ENCODE measurements at regions of chr20 and their contacts with region 1.

Region 1: DNA sequence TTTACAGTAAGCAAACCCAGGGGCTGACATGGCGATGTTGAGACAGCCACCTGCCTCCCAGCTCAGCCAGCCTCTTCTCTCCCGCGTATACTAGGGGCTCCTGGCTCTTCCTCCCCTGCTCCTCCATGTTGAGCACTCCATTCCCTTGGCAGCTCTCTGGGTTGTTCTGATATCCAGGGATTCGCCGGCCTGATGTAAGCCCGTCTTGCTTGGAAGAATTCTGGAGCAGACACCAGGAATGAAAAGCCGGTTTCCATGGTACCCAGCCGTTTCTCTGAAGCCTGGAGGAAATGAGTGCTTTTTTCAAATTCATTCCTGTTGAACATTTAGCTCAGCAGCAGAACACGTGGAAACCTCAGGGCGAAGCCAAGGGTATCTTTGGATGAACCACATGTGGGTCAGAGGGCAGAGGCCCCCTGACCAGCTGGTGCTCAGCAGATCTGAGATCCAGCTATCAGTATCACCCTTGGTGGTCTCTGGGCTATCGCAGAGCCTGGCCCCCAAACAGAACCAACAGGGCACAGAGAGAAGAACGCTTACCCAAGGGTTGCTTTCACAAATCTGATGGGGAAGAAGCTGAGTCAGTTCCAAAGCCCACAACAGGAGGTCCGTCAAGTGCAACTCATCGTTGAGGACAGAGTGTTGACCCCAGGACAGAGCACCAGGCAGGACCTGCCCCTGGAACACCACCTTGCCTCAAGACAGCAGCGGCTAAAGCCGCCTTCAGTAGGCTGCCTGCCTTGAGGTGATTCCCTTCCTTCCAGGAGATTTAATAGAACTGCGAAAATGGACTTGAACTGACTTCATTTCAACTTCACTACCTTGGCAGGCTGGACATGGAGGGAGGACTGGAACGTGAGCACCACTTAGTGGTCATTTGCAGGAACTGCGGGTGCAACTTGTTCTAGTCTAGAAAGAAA is 96.1 kb upstream of the RIN2 start:
- DNase-seq: peak; percentile 17
- H3K4me3 Mint-ChIP-seq: no peak overlapping the region
- H3K27ac Mint-ChIP-seq: no peak overlapping the region
- H3K4me1 Mint-ChIP-seq: peaks cover 2% of the 10 kb centered on the region
- H3K27me3 Mint-ChIP-seq: peaks cover 3% of the 10 kb centered on the region

Region 2: DNA sequence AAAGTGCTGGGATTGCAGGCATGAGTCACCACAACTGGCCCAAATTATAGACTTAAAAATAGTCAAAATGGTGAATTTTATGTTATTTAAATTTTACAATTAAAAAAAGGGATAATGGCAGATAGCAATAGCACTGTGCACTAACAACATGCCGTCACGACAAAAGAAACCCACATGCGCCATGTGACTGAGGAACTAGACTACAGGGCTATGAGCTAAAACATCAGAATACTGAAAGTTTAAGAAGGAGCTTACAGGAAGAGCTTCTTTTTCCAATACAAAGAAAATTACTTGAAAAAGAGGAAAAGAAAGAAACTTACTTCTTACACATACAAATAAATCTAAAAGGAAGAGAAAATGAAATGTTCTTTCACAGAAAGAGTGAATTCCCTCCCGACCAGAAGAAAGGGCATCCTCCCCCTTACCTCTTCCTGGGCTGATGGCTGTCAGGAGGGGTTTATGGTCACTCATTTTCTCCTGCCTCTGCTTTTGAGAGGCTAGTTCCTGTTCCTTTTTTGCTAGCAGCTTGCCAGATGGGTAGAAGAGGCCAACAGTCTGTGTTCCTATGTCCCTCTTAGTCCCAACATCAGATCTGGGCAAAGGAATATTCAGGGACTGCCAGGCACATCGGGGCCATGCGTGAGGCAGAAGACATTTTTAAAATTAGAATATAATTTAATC is 1249.6 kb before region 1 on chr20:
- intact Hi-C with region 1: loop called (anchors 5 kb)
- DNase-seq: no peak
- H3K4me3 Mint-ChIP-seq: no peak overlapping the region
- H3K27ac Mint-ChIP-seq: no peak overlapping the region
- H3K4me1 Mint-ChIP-seq: peaks cover 6% of the 10 kb centered on the region
- H3K27me3 Mint-ChIP-seq: peaks cover under 1% of the 10 kb centered on the region

Region 3: GRCh38 chr20:19205977-19206396 is 456.0 kb before region 1 on chr20:
- intact Hi-C with region 1: loop called (anchors 1 kb)
- DNase-seq: peak; percentile 48
- H3K4me3 Mint-ChIP-seq: no peak overlapping the region
- H3K27ac Mint-ChIP-seq: no peak overlapping the region
- H3K4me1 Mint-ChIP-seq: no peaks in the 10 kb centered on the region
- H3K27me3 Mint-ChIP-seq: peaks cover 14% of the 10 kb centered on the region

Region 4: DNA sequence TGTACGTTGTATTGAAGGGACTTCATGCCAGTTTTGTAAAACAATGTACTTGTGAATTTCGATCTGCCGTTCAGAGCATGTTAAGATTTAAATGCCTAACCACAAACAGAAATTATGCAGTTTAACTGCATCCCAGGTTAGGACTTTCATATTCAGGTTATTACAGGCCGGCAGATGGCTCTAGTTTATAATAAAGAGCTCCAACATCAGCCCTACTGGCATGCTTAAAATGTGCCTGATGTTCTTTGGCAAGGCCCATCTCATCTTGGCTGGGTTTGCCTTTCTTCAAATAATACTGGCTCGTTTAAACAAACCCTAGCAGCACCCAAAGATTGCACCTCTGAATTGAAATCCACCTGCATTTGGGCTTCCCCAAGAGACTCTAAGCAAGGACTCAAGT is 73.2 kb before region 1 on chr20:
- intact Hi-C with region 1: no loop called
- DNase-seq: no peak
- H3K4me3 Mint-ChIP-seq: no peak overlapping the region
- H3K27ac Mint-ChIP-seq: no peak overlapping the region
- H3K4me1 Mint-ChIP-seq: peaks cover 7% of the 10 kb centered on the region
- H3K27me3 Mint-ChIP-seq: no peaks in the 10 kb centered on the region

Region 5: DNA sequence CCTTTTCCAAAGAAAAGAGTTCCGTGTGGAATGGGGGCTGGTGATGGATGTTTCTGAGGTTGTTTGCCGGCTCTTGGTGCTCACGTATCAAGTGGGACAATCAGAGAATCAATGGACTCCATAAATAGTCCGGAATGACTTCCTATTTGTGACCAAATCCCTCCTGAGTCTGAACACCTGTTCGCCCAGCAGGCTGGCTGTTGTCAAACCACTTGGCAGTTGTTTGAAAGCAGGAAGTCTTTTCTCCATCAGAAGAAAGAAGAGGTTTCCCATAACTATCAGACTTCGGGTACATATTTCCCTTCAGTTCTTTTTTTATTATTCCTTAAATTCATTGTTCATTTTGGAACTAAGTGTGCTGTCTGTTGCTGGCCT is 58.6 kb before region 1 on chr20:
- intact Hi-C with region 1: no loop called
- DNase-seq: no peak
- H3K4me3 Mint-ChIP-seq: no peak overlapping the region
- H3K27ac Mint-ChIP-seq: no peak overlapping the region
- H3K4me1 Mint-ChIP-seq: peaks cover 8% of the 10 kb centered on the region
- H3K27me3 Mint-ChIP-seq: no peaks in the 10 kb centered on the region

Region 6: GRCh38 chr20:19628570-19629169 is 33.3 kb before region 1 on chr20:
- intact Hi-C with region 1: loop called (anchors 1 kb)
- DNase-seq: peak; percentile 19
- H3K4me3 Mint-ChIP-seq: no peak overlapping the region
- H3K27ac Mint-ChIP-seq: no peak overlapping the region
- H3K4me1 Mint-ChIP-seq: no peaks in the 10 kb centered on the region
- H3K27me3 Mint-ChIP-seq: no peaks in the 10 kb centered on the region

Region 7: DNA sequence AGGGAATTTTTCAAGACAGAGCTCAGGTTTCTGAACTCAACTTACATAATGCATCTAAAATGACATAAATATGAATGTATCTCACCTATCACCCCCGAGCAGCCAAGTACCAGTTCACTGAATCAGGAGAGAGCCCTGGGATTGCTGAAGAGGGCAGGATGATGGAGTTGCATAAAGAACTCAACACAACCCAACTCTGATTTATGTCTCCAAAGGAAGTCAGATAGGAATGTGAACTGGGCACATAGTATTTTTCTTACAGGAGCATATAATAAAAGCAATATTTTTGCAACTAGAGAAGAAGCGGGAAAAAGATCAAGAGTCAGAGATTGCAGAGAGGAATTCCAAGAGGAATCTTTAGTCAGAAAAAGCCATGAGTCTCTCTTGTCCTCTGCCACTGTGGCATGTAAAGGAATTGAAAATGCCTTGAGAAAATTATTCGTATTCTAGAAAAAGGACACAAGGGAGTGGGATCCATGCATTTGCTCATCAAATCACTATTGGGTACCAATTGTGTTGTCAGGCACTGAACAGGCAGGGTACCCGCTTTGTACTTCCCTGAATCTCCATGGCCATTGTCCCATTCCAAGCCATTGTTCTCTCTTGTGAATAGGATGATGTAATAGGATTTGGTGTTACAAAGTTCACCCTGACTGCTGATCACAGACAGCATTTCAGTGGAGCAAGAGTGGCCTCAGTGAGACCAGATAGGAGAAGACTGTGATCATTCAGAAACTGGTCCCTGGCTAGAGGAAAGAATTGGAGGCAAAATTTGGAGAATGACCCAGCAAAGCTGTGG is 112.4 kb after region 1 on chr20:
- intact Hi-C with region 1: no loop called
- DNase-seq: no peak
- H3K4me3 Mint-ChIP-seq: no peak overlapping the region
- H3K27ac Mint-ChIP-seq: no peak overlapping the region
- H3K4me1 Mint-ChIP-seq: no peaks in the 10 kb centered on the region
- H3K27me3 Mint-ChIP-seq: no peaks in the 10 kb centered on the region